Head of caudate nucleus (tissue), 42 donors: ENCODE measurements at regions of chr11 and their contacts with region 1.

Region 1: DNA sequence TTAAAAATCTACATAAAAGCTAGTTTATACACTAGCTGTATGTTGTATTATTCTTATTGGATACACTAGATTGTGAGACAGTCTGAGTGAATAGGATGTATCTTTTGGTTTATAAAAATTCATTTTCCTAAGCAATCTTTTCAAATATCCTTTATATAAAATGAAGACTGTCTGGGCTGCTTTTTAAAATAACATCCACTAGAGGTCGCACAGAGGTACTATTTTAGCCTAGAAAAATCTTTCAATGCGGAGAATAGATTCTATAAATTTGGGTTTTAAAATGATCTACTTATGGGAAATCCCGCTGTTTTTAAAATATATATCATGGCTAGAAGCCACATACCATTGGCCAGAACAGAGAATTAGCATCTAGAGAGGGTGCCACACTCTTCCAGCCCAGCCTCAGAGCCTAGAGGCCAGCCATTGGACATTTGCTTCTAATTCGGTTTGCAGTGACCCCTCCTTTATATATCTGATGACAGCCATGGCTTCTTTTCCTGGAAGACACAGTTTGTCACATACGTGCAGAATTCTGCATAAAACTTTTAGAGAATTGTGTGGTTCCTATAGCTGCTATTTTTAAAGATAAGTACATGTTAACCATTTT is 7.3 kb downstream of the C11orf97 start:
- DNase-seq: peak in 5 of 42 donors; percentile 18 to 66 (median 30)

Region 2: GRCh38 chr11:94433049-94433448 is 86.5 kb before region 1 on chr11:
- intact Hi-C with region 1: no loop called
- DNase-seq: no peak

Region 3: DNA sequence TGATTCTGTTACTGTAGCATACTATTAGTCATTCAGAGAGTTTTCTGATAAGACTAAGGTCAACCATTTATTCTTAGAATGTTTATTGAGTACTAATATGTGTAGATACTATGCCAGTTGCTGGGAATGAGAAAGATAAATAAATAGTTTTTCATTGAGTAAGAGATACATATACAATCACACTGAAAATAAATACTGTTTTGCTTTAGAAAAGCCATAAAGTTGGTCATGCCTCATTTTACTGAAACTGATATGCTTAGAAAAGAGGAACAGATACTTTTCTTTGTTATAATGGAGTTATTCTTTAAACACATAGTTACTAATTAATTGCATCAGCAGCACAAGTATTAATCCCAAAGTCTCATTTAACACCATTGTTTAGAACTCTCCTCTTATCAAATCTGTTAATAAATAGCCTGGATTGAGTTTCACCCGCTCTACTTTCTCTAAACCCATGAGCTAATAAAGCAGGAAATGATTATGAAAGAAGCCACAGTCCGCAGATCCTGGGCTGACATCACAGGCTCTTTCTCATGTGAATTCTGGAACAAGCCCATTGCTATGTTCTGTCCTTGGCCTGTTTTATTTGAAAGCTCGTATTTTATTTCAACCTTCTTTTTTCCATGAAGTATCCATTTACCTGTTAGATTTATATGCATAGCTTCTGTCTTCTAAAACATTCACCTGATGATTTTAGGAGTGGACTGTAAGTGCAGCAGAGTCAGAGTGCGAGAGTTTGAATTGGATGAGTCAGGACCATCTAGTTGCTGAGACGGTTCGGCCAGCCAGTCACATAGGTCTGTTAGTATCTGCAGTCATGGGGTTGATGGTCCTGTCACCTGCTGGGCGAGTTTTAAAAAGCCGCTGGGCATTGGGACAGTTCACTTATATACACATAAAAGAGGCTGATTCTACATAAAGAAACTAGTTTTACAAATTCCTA is 83.1 kb after region 1 on chr11:
- intact Hi-C with region 1: loop called (anchors 5 kb)
- DNase-seq: peak in 33 of 42 donors; percentile 13 to 91 (median 74)

Region 4: DNA sequence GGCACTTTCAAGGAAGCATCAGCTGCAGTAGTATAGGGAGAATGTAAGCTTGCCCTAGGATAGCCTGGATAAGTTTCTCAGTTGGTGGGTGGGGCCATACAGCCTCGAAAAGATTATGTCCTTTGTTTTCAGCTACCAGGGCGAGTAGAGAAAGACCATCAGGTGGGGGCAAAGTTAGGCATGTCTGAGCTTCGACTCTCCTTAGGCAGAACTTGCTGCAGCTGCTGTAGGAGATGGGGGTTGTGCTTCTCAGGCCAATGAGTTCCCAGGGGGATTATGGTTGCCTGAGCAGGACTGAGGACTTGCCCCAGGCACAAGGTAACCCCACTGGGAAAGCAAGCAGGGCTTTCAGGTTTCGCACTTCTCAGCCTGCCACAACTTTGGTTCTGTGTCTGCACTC is 884.7 kb after region 1 on chr11:
- intact Hi-C with region 1: no loop called
- DNase-seq: no peak